Tibial artery (tissue), 4 donors: ENCODE measurements at regions of chr1 and their contacts with region 1.

Region 1: DNA sequence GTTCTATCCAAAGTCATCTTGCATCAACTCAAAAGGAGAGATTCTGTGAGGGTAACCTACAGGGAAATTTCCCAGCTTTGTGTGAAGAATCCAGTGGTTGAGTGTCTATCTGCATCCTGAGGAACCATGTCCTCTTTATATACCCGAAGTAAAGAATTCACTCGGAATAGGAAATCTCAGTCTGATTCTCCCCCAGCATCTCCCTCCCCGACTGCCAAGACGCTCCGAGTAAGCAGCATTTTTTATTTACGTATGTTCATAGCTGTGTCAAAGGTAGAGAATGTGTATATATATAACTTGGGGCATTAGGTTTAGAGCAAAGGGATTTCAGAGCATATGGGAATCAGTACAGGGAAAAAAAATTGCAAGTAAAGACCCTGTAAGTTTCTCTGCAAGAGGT is 170.2 kb downstream of the SYT2 start:
- DNase-seq: no peak
- H3K4me3 ChIP-seq: peak overlapping the region; percentile 67 to 69
- H3K27ac ChIP-seq: peak overlapping the region; percentile 83 to 95
- H3K4me1 ChIP-seq: peaks cover 0 to 19% (median 0%) of the 10 kb centered on the region in 4 donors
- H3K27me3 ChIP-seq: no peaks in the 10 kb centered on the region
- CTCF ChIP-seq: no peak

Region 2: DNA sequence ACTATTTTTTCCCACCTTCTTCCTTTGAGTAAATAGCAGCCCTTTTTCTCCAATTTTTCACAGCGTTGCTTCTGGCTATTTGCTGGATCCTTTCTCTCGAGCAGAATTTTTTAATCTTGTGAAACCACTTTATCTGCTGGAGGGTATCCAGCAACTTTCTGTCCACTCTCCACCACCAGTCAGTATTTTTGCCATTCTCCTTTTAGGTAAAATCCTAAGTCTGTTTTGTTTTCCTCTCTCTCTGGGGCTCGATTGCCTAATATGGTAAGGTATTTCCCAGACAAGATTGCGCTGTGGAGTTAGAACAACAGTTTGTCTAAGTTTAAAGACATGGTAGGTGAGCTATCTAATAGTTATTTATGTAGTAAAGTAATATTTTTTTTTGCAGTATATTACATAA is 34.7 kb before region 1 on chr1:
- intact Hi-C with region 1: loop called (anchors 5 kb)
- DNase-seq: peak in 1 of 2 donors; percentile 25
- H3K4me3 ChIP-seq: peak overlapping the region; percentile 26 to 31
- H3K27ac ChIP-seq: peak overlapping the region; percentile 67 to 87
- H3K4me1 ChIP-seq: peaks cover 0 to 62% (median 15%) of the 10 kb centered on the region in 4 donors
- H3K27me3 ChIP-seq: no peaks in the 10 kb centered on the region
- CTCF ChIP-seq: no peak